ENCODE measurements at regions of chr3 and their contacts with region 1.

Region 1: DNA sequence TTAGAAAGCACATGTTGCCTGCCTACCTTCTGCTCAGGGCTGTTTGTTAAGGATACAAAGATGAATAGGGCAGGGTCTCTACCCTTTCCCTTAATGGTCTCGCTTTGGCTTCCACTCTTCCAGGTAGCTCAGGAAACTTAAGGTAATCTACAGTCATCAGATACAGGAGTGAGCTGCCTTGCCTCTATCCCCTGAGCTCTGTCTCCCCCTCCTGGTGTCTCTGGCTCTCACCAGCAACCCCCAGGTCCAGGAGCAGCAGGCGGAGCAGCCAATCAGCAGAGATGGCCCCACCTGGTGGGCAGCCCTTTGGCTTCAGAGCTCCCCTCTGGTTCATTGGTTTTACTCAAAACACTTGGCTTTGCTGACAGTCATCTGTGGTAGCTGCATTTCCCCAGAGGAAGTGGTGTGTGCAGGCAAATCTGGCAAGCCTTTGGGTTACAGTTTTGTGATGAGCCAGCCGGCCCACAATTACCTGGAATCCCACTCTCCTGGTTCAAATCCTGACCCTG is 8.5 kb upstream of the CX3CR1 start:
- DNase-seq: peak; percentile 94 to 98 (median 98)
- H3K4me3 ChIP-seq: no peak overlapping the region
- H3K27ac ChIP-seq: no peak overlapping the region
- H3K4me1 ChIP-seq: peaks cover 0 to 16% (median 11%) of the 10 kb centered on the region in 4 experiments
- H3K27me3 ChIP-seq: no peaks in the 10 kb centered on the region

Region 2: GRCh38 chr3:38533285-38533976 is 754.9 kb before region 1 on chr3:
- CTCF ChIA-PET with region 1: no interaction called
- POLR2A ChIA-PET with region 1: no interaction called
- DNase-seq: no peak
- H3K4me3 ChIP-seq: no peak overlapping the region
- H3K27ac ChIP-seq: no peak overlapping the region
- H3K4me1 ChIP-seq: no peaks in the 10 kb centered on the region
- H3K27me3 ChIP-seq: no peaks in the 10 kb centered on the region

Region 3: DNA sequence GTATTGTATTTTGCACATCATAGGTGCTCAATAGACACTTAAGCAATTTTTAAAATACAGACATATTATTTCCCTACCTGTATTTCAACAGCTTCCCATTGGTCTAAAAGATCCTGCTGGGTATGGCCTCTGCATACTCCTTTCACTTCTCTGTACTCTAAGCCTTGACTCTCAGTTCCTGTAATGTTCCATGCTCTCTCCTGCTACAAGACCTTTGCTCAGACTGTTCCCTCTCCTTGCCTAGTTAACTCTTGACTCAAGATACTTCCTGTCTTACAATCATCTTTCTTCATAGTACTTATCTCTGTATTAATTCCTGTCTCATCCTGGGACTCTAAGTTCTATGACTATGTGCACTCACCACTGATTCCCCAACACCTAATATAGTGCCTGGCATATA is 238.3 kb before region 1 on chr3:
- CTCF ChIA-PET with region 1: no interaction called
- POLR2A ChIA-PET with region 1: no interaction called
- DNase-seq: peak in 1 of 3 donors; percentile 9
- H3K4me3 ChIP-seq: no peak overlapping the region
- H3K27ac ChIP-seq: no peak overlapping the region
- H3K4me1 ChIP-seq: peaks cover 2 to 21% (median 14%) of the 10 kb centered on the region in 4 experiments
- H3K27me3 ChIP-seq: no peaks in the 10 kb centered on the region

Region 4: GRCh38 chr3:39107388-39108199 is 180.8 kb before region 1 on chr3 and contains the starts of genes GORASP1 and TTC21A:
- CTCF ChIA-PET with region 1: interaction called, 24 read pairs
- POLR2A ChIA-PET with region 1: no interaction called
- DNase-seq: peak; percentile 80 to 89 (median 85)
- H3K4me3 ChIP-seq: peak within 1 kb of the TSS; percentile 73 to 94 (median 85)
- H3K27ac ChIP-seq: peak within 1 kb of the TSS; percentile 37 to 71
- H3K4me1 ChIP-seq: peaks cover 2 to 35% (median 25%) of the 10 kb centered on the region in 4 experiments
- H3K27me3 ChIP-seq: no peaks in the 10 kb centered on the region

Region 5: DNA sequence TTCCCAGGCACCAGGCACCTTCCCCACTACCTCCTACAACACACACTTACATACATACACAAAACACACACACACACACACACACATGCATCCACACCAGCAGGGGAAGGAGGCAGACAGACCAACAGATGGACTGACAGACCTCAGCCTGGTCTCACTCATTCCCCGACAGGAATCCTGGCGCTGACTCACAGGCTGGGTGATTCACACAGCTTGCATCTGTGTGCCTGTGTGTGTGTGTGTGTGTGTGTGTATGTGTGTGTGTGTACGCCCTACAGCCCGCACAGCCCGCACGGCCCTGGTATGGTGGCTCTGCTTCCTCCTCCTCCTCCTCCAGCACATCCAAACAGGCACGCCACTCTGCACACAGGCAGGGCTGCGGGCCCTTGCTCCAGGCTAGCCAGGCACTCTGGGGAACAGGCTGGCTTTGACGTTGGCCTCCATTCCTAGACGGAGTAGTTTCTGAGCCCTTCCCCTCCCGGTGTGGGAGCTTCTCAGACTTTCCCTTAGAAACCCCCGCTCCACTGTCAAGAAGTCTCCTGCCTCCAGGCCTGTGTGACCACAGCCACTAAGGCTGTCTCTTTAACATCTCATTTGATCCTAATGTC is 141.3 kb before region 1 on chr3:
- CTCF ChIA-PET with region 1: interaction called, 16 read pairs
- POLR2A ChIA-PET with region 1: no interaction called
- DNase-seq: peak; percentile 83 to 97 (median 94)
- H3K4me3 ChIP-seq: peak overlapping the region in 6 of 7 experiments; percentile 45 to 72 (median 53)
- H3K27ac ChIP-seq: peak overlapping the region; percentile 95 to 96
- H3K4me1 ChIP-seq: peaks cover 25 to 80% (median 73%) of the 10 kb centered on the region in 4 experiments
- H3K27me3 ChIP-seq: no peaks in the 10 kb centered on the region

Region 6: GRCh38 chr3:39208463-39209055 is 79.8 kb before region 1 on chr3:
- CTCF ChIA-PET with region 1: interaction called, 94 read pairs
- POLR2A ChIA-PET with region 1: no interaction called
- DNase-seq: peak; percentile 49 to 60 (median 53)
- H3K4me3 ChIP-seq: no peak overlapping the region
- H3K27ac ChIP-seq: no peak overlapping the region
- H3K4me1 ChIP-seq: peaks cover 0 to 14% (median 4%) of the 10 kb centered on the region in 4 experiments
- H3K27me3 ChIP-seq: no peaks in the 10 kb centered on the region

Region 7: DNA sequence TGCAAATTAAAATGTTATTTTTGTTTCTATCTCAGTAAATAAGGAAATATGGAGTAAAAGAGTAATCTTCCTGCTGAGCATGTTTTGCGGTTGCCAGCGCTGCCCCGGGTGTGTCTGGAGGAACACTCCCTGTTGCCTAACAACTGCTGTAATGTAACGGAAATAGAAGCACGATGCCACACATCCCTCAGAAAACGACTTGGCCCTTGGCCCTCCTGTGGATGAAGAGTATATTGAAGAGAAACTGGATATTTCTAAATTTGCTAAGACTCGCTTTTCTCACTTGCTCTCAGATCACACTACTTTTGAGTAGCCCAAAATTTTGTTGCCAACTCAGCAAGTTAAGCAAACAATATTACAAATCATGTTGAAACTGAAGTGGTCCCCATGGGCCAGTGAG is 27.4 kb before region 1 on chr3:
- CTCF ChIA-PET with region 1: interaction called, 45 read pairs
- POLR2A ChIA-PET with region 1: interaction called, 4 read pairs
- DNase-seq: peak; percentile 96 to 99 (median 97)
- H3K4me3 ChIP-seq: peak overlapping the region in 1 of 7 experiments; percentile 4
- H3K27ac ChIP-seq: peak overlapping the region in 1 of 2 experiments; percentile 72
- H3K4me1 ChIP-seq: peaks cover 19 to 65% (median 36%) of the 10 kb centered on the region in 4 experiments
- H3K27me3 ChIP-seq: no peaks in the 10 kb centered on the region

Region 8: DNA sequence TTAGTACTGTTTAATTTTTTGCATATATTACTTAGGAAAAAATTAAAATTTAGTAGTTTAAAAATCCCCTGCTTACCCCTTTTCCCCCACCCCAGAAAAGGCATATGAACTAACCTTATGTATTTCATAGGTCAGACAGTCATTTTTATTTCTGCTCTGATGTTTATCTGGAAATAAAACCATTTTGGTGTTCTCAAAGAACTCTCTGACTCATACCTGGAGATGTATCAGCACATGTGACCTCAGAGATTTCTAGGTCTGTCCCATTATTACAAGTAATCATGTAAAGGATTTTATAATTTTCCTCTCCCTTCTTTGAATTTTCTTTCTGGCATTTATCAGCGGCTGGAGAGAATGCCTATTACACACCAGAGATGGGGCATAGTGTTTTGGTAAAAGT is 27.1 kb after region 1 on chr3:
- CTCF ChIA-PET with region 1: no interaction called
- POLR2A ChIA-PET with region 1: no interaction called
- DNase-seq: no peak
- H3K4me3 ChIP-seq: no peak overlapping the region
- H3K27ac ChIP-seq: no peak overlapping the region
- H3K4me1 ChIP-seq: no peaks in the 10 kb centered on the region
- H3K27me3 ChIP-seq: no peaks in the 10 kb centered on the region

Region 9: DNA sequence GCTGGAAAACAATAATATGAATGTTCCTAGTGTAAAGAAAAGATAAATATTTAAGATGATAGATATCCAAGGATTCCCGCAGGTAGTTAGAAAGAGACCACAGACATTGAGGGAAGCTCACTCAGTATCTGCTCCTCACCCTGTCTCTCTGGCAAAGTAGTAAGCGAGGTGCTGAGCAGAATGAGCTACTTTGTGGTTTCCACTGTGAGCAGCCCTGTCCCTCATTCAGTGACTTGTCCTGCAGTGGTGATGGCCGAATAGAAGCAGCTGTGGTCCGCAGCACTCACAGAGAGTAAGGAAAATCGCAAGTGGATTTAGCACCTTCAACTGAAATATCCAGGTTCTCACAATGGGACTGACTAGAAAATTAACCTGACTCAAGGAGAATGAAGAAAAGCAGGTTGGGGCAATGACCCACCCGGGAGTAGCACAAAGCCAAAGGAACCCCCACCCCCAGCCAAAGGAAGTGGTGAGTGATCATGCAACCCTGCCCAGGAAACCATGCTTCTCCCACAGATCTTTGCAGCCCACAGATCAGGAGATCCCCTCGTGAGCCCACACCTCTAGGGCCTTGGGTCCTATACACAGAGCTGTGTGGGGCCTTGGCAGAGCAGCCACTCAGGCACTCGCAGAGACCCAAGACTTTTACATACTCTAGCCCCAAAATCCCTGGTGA is 73.0 kb after region 1 on chr3:
- CTCF ChIA-PET with region 1: interaction called, 11 read pairs
- POLR2A ChIA-PET with region 1: no interaction called
- DNase-seq: peak; percentile 52 to 88 (median 88)
- H3K4me3 ChIP-seq: peak overlapping the region in 3 of 7 experiments; percentile 6 to 60 (median 24)
- H3K27ac ChIP-seq: no peak overlapping the region
- H3K4me1 ChIP-seq: peaks cover 7 to 30% (median 21%) of the 10 kb centered on the region in 4 experiments
- H3K27me3 ChIP-seq: no peaks in the 10 kb centered on the region

Measured in common myeloid progenitor, CD34-positive (primary cell).